Activated T-helper 2 cell treated with anti-CD3 and anti-CD28 coated beads, Interferon-gamma antibody, Interleukin-2, Interleukin-4, amounts not matched to agents 10 μg/mL and 5 μg/mL and 100 μg/mL, durations not matched to agents 14 hours and 24 hours and 36 hours (primary cell): ENCODE measurements at regions of chr3 and their contacts with region 1.

Region 1: DNA sequence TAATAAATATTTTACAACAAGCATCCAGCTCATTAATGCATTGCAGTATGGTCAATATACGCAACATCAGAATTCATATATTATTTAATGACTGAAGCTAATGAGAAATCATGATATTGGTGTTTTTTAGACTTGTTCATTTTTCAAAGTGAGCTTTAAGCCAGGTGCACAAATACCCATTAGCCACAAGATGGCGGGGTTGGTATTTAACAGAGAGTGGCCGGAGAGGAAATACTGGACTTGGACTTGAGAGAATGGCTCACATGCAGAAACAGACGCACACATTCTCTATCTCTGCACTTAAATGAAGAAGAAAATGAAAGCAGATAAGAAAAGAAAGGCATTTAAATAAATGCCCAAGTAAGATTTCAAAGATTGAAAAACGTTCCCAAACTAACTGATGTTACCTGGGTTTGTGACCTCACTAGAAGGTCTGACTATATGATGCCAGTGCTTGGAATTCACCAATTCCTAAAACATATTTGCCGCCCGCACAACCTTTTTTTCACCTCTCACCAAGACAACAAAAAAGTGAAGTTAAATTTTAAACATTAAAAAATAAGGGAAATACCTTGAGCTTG is 21.2 kb upstream of the CRBN start:
- DNase-seq: no peak
- H3K4me3 Mint-ChIP-seq: no peak overlapping the region
- H3K27ac Mint-ChIP-seq: no peak overlapping the region
- H3K4me1 Mint-ChIP-seq: peaks cover 8% of the 10 kb centered on the region
- H3K27me3 Mint-ChIP-seq: peaks cover 11% of the 10 kb centered on the region

Region 2: GRCh38 chr3:3998140-3998922 is 797.6 kb after region 1 on chr3:
- intact Hi-C with region 1: loop called (anchors 1 kb)
- DNase-seq: peak; percentile 8
- H3K4me3 Mint-ChIP-seq: no peak overlapping the region
- H3K27ac Mint-ChIP-seq: no peak overlapping the region
- H3K4me1 Mint-ChIP-seq: no peaks in the 10 kb centered on the region
- H3K27me3 Mint-ChIP-seq: peaks cover 2% of the 10 kb centered on the region

Region 3: DNA sequence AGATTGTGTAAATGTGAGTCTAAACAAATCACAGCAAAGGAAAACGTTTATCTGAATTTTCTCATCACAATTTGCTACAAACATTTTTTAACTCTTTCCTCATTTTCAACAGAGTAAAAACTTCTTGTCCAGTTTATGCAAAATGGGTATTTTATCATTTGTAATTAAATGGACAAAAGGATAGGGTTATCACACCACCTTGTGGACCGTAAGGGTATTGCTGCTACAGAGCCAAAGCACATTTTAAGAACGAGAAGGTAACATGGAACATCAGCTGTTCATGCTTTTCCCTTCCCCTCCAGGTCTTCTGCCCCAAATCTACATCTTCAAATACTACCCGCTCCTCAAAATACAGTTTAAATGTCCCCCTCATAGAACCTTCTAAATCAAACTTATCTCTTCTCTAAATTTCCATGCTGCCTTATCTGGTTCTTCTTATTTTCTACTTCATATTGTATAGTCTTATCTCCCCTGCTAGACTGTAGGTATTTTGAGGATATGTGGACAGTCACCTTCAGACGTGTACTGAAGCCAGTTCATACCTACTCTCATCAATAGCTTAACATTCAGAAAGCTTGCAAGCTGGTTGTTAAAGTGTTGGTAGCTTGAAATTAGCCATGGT is 1089.7 kb after region 1 on chr3:
- intact Hi-C with region 1: loop called (anchors 2 kb)
- DNase-seq: no peak
- H3K4me3 Mint-ChIP-seq: no peak overlapping the region
- H3K27ac Mint-ChIP-seq: no peak overlapping the region
- H3K4me1 Mint-ChIP-seq: no peaks in the 10 kb centered on the region
- H3K27me3 Mint-ChIP-seq: peaks cover 22% of the 10 kb centered on the region